IMR-90 (cell line): ENCODE measurements at regions of chr3 and their contacts with region 1.

Region 1: DNA sequence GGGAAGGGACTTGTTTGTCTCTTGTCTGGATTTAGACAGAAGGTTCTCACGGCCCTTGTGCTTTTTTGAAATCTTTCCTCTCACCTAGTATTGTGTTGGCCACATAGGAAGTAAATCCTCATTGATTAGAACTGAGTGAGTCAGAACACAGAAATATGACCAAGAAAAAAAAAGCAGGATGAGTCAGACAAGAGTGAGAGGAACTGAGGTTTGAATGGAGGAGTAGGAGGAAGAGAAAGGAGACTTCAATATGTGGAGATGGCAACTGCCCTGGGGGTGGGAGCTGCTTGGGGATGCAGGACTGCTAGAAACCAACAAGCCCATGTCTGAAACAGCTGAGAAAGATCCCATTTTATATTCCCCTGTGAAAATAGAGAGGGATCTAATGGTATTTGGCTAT is 194.1 kb upstream of the ZBTB20 start:
- DNase-seq: peak; percentile 78
- ATAC-seq: peak; percentile 82
- H3K4me3 ChIP-seq: no peak overlapping the region
- H3K27ac ChIP-seq: no peak overlapping the region
- H3K4me1 ChIP-seq: peaks cover 1% of the 10 kb centered on the region; the same call in 1 of the 2 replicates
- H3K27me3 ChIP-seq: no peaks in the 10 kb centered on the region
- CTCF ChIP-seq: no peak
- POLR2A ChIP-seq: no peak
- RAD21 ChIP-seq: no peak

Region 2: DNA sequence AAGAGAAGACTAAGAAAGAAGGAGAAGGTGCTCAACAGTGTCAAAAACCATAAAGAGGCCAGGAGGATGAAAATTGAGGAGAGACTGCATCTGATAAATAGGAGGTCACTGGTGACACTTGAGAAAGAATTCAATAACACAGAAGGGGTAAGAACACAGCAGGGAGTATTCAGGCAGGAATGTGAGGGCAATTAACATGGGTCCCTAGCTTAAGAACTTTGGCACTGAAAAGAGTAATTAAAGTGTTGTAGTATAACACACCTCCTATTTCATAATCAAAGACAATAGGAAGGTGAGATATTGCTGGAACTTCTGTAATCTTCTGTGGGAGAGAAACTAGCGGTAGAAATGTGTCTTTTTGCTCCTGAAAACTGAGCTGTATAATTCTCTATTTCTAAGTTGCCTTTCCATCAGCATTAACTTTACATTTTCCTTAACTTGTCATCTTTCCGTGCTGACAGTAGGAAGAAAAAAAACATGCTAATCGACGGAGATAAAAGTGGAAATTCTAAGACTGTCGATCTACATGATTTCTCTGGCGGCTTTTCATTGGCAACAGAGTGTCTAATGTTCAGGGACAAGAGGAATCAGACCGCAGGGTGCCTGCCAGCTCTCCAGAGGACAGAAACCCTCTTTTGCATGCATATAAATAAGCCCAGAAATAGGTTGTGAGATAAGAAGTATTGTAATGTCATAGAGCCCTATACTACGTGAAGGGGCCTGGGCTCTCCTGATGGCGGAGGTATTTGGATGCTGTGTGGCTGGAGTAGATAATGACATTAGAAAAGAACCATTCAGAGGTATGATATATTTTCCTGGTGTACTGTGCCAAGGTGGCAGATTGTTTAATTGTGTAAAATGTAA is 134.2 kb after region 1 on chr3:
- CTCF ChIA-PET with region 1: no interaction called
- POLR2A ChIA-PET with region 1: no interaction called
- dilution Hi-C with region 1: no loop called
- in situ Hi-C with region 1: no loop called
- intact Hi-C with region 1: no loop called
- DNase-seq: no peak
- ATAC-seq: no peak
- H3K4me3 ChIP-seq: no peak overlapping the region
- H3K27ac ChIP-seq: no peak overlapping the region
- H3K4me1 ChIP-seq: no peaks in the 10 kb centered on the region
- H3K27me3 ChIP-seq: peaks cover 2% of the 10 kb centered on the region
- CTCF ChIP-seq: no peak
- POLR2A ChIP-seq: no peak
- RAD21 ChIP-seq: no peak

Region 3: DNA sequence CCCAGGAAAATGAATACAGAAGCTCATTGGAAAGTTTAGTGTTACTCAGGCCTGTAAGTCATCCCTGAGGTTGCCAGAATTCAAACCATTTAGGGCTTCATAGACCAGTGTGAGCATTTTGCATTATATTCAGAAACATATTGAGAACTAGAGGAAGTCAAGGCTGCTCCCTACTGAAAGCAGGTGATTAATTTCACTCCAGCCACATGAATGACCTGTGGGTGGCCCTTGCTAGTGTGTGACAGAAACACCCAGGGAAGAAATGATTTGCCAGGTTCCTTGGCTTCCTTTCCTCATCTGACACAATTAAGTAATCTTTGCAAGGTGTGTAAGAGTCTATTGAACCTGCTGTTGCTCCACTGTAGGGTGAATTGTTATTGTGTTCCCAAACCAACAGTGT is 343.9 kb after region 1 on chr3:
- CTCF ChIA-PET with region 1: no interaction called
- POLR2A ChIA-PET with region 1: no interaction called
- dilution Hi-C with region 1: no loop called
- in situ Hi-C with region 1: no loop called
- intact Hi-C with region 1: loop called (anchors 10 kb)
- DNase-seq: no peak
- ATAC-seq: no peak
- H3K4me3 ChIP-seq: no peak overlapping the region
- H3K27ac ChIP-seq: no peak overlapping the region
- H3K4me1 ChIP-seq: no peaks in the 10 kb centered on the region
- H3K27me3 ChIP-seq: peaks cover 8% of the 10 kb centered on the region
- CTCF ChIP-seq: no peak
- POLR2A ChIP-seq: no peak
- RAD21 ChIP-seq: no peak